CD8-positive, alpha-beta T cell (primary cell): ENCODE measurements at regions of chr9 and their contacts with region 1.

Region 1: GRCh38 chr9:136410500-136411287 is at the starts of genes ENTR1 and PMPCA:
- DNase-seq: peak; percentile 88 to 97 (median 96)
- ATAC-seq: peak; percentile 85
- H3K4me3 ChIP-seq: peak within 1 kb of the TSS; percentile 79 to 99
- H3K4me3 Mint-ChIP-seq: peak within 1 kb of the TSS; percentile 89
- H3K27ac ChIP-seq: peak within 1 kb of the TSS; percentile 88 to 96
- H3K27ac Mint-ChIP-seq: peak within 1 kb of the TSS; percentile 90
- H3K4me1 ChIP-seq: peaks cover 35% of the 10 kb centered on the region
- H3K4me1 Mint-ChIP-seq: peaks cover 40% of the 10 kb centered on the region
- H3K27me3 ChIP-seq: no peaks in the 10 kb centered on the region
- H3K27me3 Mint-ChIP-seq: no peaks in the 10 kb centered on the region
- CTCF ChIP-seq: no peak
- total RNA-seq, gene ENTR1: 33.0 to 34.4 TPM
- total RNA-seq, gene PMPCA: 107 to 111 TPM

Region 2: GRCh38 chr9:136439550-136440408 is 29.1 kb after region 1 on chr9 and contains the start of gene INPP5E:
- CTCF ChIA-PET with region 1: interaction called, 3 read pairs
- POLR2A ChIA-PET with region 1: interaction called, 3 read pairs
- intact Hi-C with region 1: loop called (anchors 1 kb)
- DNase-seq: peak; percentile 72 to 94 (median 82)
- ATAC-seq: peak; percentile 82
- H3K4me3 ChIP-seq: peak within 1 kb of the TSS; percentile 56 to 68
- H3K4me3 Mint-ChIP-seq: peak within 1 kb of the TSS; percentile 83
- H3K27ac ChIP-seq: peak within 1 kb of the TSS; percentile 25 to 42
- H3K27ac Mint-ChIP-seq: peak within 1 kb of the TSS; percentile 37
- H3K4me1 ChIP-seq: peaks cover 27% of the 10 kb centered on the region
- H3K4me1 Mint-ChIP-seq: peaks cover 26% of the 10 kb centered on the region
- H3K27me3 ChIP-seq: no peaks in the 10 kb centered on the region
- H3K27me3 Mint-ChIP-seq: no peaks in the 10 kb centered on the region
- CTCF ChIP-seq: peak; percentile 60
- total RNA-seq, gene INPP5E: 11.4 to 12.7 TPM

Region 3: DNA sequence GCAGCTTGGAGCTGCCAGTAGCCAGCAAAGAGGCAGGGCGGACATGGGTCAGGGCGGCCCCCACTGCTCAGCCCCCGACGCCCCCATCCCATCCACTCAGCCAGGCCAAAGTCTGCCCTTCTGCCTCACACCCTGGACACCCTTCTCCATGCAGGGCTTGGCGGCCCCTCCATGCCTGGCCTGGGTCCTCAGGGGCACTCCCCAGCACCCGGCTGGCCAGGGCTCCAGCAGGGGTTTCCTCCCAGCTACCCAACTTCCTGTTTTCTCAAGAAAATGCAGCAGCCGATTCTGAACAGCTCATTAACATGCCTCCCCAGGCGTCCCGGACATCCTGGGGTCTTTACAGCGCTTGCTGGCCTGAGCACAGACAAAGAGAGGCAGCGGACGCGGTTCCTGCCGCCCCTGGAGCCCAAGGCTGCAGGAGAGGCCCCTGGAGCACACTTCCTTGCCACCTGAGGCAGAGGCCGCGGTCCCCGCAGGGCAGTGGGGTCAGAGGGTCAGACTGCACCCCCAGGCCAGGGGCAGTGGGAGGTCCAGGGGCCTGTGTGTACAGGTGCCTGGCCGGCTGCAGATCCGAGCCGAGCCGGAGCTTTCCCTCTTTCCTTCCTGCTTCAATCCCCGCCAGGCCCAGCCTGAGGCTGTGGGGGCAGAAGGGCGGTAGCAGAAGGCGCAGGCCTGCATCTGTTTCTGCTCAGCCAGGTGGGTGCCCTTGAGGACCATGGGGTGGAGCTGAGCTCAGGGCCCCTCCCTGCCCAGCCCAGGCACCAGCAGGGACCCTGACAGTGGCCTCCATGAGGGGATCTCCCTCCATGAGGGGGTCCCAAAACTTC is 910.1 kb after region 1 on chr9:
- CTCF ChIA-PET with region 1: no interaction called
- POLR2A ChIA-PET with region 1: no interaction called
- intact Hi-C with region 1: no loop called
- DNase-seq: peak in 5 of 9 experiments; percentile 18 to 74 (median 24)
- ATAC-seq: peak; percentile 49
- H3K4me3 ChIP-seq: peak overlapping the region in 1 of 2 experiments; percentile 39
- H3K4me3 Mint-ChIP-seq: peak overlapping the region; percentile 11
- H3K27ac ChIP-seq: no peak overlapping the region
- H3K27ac Mint-ChIP-seq: no peak overlapping the region
- H3K4me1 ChIP-seq: peaks cover 13% of the 10 kb centered on the region
- H3K4me1 Mint-ChIP-seq: peaks cover 4% of the 10 kb centered on the region
- H3K27me3 ChIP-seq: peaks cover 4 to 10% of the 10 kb centered on the region in 2 experiments
- H3K27me3 Mint-ChIP-seq: peaks cover 7% of the 10 kb centered on the region
- CTCF ChIP-seq: no peak